ENCODE measurements at regions of chr12 and their contacts with region 1.

Region 1: DNA sequence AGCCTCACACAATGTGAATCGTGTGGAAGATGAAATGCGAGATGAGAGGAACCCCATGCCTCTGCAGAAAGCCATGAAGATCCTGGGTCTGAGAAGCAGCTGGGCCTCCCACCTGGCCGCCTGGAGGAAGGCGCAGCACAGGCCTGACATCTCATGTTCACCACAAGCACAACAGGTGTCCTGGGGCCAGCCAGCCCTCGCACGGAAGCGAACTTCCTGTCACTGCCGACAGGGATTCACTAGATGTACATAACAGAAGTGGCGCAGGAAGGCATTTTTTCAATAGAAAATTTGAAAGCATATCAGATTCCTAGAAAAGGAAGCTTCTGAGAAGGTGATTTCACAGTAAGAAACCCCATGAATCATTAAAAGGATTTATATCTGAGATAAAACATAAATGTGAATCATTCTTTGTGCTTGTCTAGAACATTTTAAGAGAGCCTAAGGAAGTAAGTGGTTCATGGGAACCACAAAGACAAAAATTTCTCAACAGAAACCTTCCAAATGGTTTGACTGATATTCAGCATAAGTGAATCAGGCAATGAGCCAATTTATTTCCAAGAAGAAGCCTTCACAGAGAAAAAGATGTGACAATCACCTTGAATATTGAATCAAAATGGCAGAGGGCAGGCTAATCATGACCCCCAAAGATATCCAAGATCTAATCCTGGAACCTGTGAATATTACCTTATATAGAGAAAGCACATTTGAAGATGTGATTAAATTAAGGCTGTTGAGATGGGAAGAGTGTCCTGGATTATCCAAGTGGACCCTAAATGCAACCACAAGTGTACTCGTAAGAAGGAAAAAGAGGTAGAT is 311.9 kb downstream of the DUSP6 start:
- DNase-seq: peak; percentile 83
- H3K4me3 Mint-ChIP-seq: peak overlapping the region; percentile 50
- H3K27ac Mint-ChIP-seq: peak overlapping the region; percentile 94
- H3K4me1 Mint-ChIP-seq: peaks cover 67% of the 10 kb centered on the region
- H3K27me3 Mint-ChIP-seq: no peaks in the 10 kb centered on the region

Region 2: DNA sequence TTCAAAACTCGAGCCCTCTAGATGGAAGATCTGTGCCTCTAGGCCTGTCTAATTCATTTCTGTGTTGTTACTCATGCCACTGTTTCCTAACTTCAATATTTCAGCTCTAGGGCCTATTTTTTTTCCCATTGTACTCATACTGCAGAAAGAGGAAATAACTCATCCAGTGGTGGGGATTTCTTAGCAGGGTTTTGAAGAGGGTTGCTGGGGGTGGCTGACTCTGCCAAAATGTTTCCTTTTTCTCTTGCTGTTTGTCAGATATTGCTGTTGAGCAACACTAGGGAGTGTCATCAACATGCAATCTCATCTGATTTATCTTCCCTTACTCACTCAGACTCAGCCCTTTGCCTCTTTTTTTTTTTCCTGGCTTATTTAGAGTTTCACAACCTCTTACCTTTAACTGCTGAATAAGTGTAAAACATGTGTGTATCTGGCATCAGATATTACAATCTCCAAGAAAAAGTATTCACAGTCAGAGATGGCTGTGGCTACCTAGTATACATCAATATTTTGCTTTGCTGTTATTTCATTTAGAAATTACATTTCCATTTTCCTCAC is 122.4 kb after region 1 on chr12:
- intact Hi-C with region 1: loop called (anchors 1 kb)
- DNase-seq: peak; percentile 55
- H3K4me3 Mint-ChIP-seq: no peak overlapping the region
- H3K27ac Mint-ChIP-seq: no peak overlapping the region
- H3K4me1 Mint-ChIP-seq: peaks cover 27% of the 10 kb centered on the region
- H3K27me3 Mint-ChIP-seq: no peaks in the 10 kb centered on the region

Region 3: GRCh38 chr12:89244536-89244935 is 204.2 kb after region 1 on chr12:
- intact Hi-C with region 1: loop called (anchors 1 kb)
- DNase-seq: peak; percentile 47
- H3K4me3 Mint-ChIP-seq: peak overlapping the region; percentile 35
- H3K27ac Mint-ChIP-seq: peak overlapping the region; percentile 85
- H3K4me1 Mint-ChIP-seq: peaks cover 67% of the 10 kb centered on the region
- H3K27me3 Mint-ChIP-seq: no peaks in the 10 kb centered on the region

Region 4: DNA sequence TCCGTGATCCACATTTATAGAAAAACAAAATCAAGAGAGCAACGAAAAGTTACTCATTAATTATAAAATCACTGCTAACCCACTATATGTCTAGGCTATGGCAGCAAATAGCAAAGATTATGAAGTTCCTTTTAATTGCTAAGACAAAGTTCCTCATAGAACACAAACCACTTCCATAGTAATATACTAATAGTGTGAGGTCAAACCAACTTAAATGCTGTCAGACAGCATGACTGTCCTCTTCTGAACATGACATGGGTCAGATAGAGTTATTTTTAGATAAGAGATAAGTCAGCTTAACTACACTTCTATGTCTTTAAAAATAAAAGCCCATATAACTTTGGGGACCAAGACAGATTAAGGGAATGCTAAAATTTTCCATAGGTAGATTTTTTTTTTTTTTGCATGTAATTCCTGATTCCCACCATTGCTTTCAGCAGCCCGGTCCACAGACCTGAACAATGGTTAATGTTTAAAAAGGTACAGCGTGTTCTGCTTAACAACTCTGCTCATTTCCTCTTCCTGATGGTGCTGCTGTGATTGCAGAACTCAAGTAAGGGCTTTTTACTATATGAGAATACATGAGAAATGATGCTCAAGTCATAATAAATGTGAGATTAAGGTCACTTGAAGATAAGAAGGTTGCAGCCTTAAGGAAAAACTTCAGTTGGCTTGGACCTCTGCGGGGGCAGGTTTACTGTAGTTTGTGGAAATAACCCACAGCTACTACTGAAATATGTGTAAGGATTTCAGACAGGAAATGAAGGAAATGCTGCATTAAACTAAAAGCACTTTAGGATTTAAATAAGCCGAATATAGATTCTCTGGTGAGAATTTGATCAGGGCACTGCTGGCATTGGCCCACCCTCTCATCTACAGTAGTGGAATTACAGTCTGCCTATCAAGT is 349.7 kb after region 1 on chr12:
- intact Hi-C with region 1: loop called (anchors 1 kb)
- DNase-seq: no peak
- H3K4me3 Mint-ChIP-seq: peak overlapping the region; percentile 2
- H3K27ac Mint-ChIP-seq: peak overlapping the region; percentile 87
- H3K4me1 Mint-ChIP-seq: peaks cover 33% of the 10 kb centered on the region
- H3K27me3 Mint-ChIP-seq: no peaks in the 10 kb centered on the region

Region 5: GRCh38 chr12:89524541-89525285 is 484.4 kb after region 1 on chr12 and contains the start of gene GALNT4:
- intact Hi-C with region 1: loop called (anchors 1 kb)
- DNase-seq: peak; percentile 75
- H3K4me3 Mint-ChIP-seq: peak within 1 kb of the TSS; percentile 99
- H3K27ac Mint-ChIP-seq: peak within 1 kb of the TSS; percentile 99
- H3K4me1 Mint-ChIP-seq: peaks cover 51% of the 10 kb centered on the region
- H3K27me3 Mint-ChIP-seq: no peaks in the 10 kb centered on the region
- total RNA-seq, gene GALNT4: 8.8 and 9.1 TPM in 2 replicates

Measured in activated T-helper 2 cell treated with anti-CD3 and anti-CD28 coated beads, Interferon-gamma antibody, Interleukin-2, Interleukin-4, amounts not matched to agents 10 μg/mL and 5 μg/mL and 100 μg/mL, durations not matched to agents 14 hours and 24 hours and 36 hours (primary cell).